CD8-positive, alpha-beta T cell (primary cell): ENCODE measurements at regions of chr9 and their contacts with region 1.

Region 1: GRCh38 chr9:23739753-23740152 is 86.3 kb downstream of the ELAVL2 start:
- DNase-seq: no peak
- ATAC-seq: no peak
- H3K4me3 ChIP-seq: no peak overlapping the region
- H3K4me3 Mint-ChIP-seq: no peak overlapping the region
- H3K27ac ChIP-seq: no peak overlapping the region
- H3K27ac Mint-ChIP-seq: no peak overlapping the region
- H3K4me1 ChIP-seq: no peaks in the 10 kb centered on the region
- H3K4me1 Mint-ChIP-seq: no peaks in the 10 kb centered on the region
- H3K27me3 ChIP-seq: no peaks in the 10 kb centered on the region
- H3K27me3 Mint-ChIP-seq: no peaks in the 10 kb centered on the region
- CTCF ChIP-seq: no peak

Region 2: DNA sequence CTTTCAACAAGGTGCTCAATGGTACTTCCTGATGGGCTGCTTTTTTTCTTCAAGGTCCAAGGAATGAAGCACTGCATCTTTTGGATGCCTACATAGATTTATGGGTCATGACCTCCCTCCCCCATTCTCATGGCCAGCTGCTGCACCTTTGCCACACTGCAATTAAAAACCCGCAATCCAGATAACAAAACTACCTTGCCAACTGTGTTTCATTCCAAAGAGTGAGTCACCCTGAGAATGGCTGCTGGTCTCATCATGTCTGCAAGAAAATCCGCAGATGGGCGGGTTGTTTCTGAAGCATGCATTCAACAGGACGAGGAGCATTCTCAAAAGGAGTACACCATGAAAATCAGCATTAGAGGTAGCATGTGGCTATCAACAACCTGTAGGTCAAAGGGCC is 53.5 kb before region 1 on chr9:
- CTCF ChIA-PET with region 1: no interaction called
- POLR2A ChIA-PET with region 1: no interaction called
- intact Hi-C with region 1: loop called in 1 of 2 experiments (anchors 5 kb)
- DNase-seq: no peak
- ATAC-seq: no peak
- H3K4me3 ChIP-seq: no peak overlapping the region
- H3K4me3 Mint-ChIP-seq: no peak overlapping the region
- H3K27ac ChIP-seq: no peak overlapping the region
- H3K27ac Mint-ChIP-seq: no peak overlapping the region
- H3K4me1 ChIP-seq: no peaks in the 10 kb centered on the region
- H3K4me1 Mint-ChIP-seq: no peaks in the 10 kb centered on the region
- H3K27me3 ChIP-seq: no peaks in the 10 kb centered on the region
- H3K27me3 Mint-ChIP-seq: no peaks in the 10 kb centered on the region
- CTCF ChIP-seq: no peak